AG04449 (cell line): ENCODE measurements at regions of chr17 and their contacts with region 1.

Region 1: DNA sequence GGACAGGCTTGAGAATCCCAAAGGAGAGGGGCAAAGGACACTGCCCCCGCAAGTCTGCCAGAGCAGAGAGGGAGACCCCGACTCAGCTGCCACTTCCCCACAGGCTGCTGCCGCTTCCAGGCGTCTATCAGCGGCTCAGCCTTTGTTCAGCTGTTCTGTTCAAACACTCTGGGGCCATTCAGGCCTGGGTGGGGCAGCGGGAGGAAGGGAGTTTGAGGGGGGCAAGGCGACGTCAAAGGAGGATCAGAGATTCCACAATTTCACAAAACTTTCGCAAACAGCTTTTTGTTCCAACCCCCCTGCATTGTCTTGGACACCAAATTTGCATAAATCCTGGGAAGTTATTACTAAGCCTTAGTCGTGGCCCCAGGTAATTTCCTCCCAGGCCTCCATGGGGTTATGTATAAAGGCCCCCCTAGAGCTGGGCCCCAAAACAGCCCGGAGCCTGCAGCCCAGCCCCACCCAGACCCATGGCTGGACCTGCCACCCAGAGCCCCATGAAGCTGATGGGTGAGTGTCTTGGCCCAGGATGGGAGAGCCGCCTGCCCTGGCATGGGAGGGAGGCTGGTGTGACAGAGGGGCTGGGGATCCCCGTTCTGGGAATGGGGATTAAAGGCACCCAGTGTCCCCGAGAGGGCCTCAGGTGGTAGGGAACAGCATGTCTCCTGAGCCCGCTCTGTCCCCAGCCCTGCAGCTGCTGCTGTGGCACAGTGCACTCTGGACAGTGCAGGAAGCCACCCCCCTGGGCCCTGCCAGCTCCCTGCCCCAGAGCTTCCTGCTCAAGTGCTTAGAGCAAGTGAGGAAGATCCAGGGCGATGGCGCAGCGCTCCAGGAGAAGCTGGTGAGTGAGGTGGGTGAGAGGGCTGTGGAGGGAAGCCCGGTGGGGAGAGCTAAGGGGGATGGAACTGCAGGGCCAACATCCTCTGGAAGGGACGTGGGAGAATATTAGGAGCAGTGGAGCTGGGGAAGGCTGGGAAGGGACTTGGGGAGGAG is at the start of gene CSF3:
- DNase-seq: no peak
- H3K4me3 ChIP-seq: no peak within 1 kb of the TSS
- CTCF ChIP-seq: no peak

Region 2: GRCh38 chr17:39903158-39903884 is 112.0 kb before region 1 on chr17:
- CTCF ChIA-PET with region 1: no interaction called
- POLR2A ChIA-PET with region 1: no interaction called
- DNase-seq: no peak
- H3K4me3 ChIP-seq: no peak overlapping the region
- CTCF ChIP-seq: no peak

Region 3: GRCh38 chr17:39927101-39927928 is 88.0 kb before region 1 on chr17 and contains the starts of genes LRRC3C and ORMDL3:
- CTCF ChIA-PET with region 1: no interaction called
- POLR2A ChIA-PET with region 1: no interaction called
- DNase-seq: peak; percentile 41
- H3K4me3 ChIP-seq: peak within 1 kb of the TSS; percentile 82
- CTCF ChIP-seq: no peak

Region 4: GRCh38 chr17:39939588-39940419 is 75.5 kb before region 1 on chr17:
- CTCF ChIA-PET with region 1: no interaction called
- POLR2A ChIA-PET with region 1: no interaction called
- DNase-seq: peak; percentile 57
- H3K4me3 ChIP-seq: no peak overlapping the region
- CTCF ChIP-seq: peak; percentile 64

Region 5: GRCh38 chr17:39988206-39988810 is 27.0 kb before region 1 on chr17:
- CTCF ChIA-PET with region 1: interaction called, 11 read pairs
- POLR2A ChIA-PET with region 1: no interaction called
- DNase-seq: no peak
- H3K4me3 ChIP-seq: no peak overlapping the region
- CTCF ChIP-seq: no peak

Region 6: DNA sequence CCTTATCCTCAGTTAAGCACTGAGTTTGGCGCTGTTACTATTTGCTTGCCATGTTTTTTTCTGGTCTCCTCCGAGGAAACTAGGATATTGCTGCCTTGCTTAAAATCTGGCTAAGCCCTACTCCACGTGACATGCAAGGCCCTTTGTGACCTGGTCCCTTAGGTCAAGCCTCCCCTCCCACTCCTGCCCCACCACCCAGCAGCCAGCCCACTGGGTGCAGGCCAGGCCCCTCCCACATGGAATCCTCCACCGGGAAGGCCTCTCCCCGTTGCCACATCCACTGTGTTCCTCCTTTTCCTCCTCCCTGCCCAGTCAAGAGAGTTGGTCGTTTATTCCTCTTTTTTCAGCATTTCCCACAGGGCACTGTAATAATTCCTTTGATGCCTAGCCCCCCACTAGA is 18.5 kb before region 1 on chr17:
- CTCF ChIA-PET with region 1: interaction called, 39 read pairs
- POLR2A ChIA-PET with region 1: no interaction called
- DNase-seq: no peak
- H3K4me3 ChIP-seq: no peak overlapping the region
- CTCF ChIP-seq: no peak